ENCODE measurements at regions of chr3 and their contacts with region 1.

Region 1: DNA sequence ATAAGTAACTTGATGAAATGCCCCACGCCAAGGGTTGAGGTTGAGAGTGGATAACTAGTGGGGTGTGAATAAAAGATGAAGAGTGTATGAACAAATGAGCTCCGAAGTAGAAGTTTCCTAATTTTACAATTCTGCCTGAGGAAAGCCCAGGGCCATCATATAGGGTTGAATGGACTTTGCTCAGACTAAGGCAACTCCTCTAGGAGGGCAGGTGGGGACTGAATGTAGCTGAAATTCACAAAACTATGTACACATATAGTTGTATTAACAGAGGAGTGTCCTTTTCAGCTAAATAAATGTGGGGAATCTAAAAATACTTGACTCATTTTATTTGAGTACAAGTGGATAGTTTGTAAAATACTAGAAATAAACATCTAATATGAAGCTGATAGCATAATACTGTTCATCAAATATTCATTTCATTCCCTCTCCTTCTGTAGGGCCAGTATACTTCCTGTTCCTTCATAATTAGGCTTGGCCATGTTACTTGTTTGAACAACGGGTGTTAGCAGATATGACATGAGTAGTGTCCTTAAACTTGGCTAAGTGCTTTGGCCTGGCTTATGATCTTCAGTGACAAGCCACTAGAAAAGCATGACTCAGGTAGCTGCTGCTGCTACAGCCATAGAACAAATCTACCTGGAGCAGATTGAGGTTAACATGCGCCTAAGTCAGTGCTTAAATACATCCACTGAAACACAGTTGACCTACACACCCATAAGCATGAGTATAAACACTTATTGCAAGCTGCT is 26.5 kb downstream of the PLSCR1 start:
- DNase-seq: no peak
- H3K4me3 Mint-ChIP-seq: no peak overlapping the region
- H3K27ac Mint-ChIP-seq: peak overlapping the region; percentile 6
- H3K4me1 Mint-ChIP-seq: peaks cover 10% of the 10 kb centered on the region
- H3K27me3 Mint-ChIP-seq: no peaks in the 10 kb centered on the region

Region 2: DNA sequence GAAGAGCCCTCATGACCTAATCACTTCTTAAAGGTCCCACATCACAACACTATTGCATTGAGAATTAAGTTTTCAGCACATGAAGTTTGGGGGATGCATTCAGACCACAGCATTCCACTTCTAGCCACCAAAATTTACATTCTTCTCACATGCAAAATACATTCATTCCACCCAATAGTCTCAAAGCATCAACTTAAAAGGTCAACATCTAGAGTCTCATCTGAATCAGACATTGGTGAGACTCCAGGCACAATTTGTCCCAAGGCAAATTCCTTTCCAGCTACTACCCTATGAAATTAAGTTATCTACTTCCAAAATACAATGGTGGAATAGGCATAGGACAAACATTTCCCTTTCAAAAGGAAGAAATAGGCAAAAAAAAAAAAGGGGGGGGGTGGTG is 113.4 kb before region 1 on chr3:
- CTCF ChIA-PET with region 1: no interaction called
- POLR2A ChIA-PET with region 1: no interaction called
- DNase-seq: no peak
- H3K4me3 Mint-ChIP-seq: no peak overlapping the region
- H3K27ac Mint-ChIP-seq: no peak overlapping the region
- H3K4me1 Mint-ChIP-seq: no peaks in the 10 kb centered on the region
- H3K27me3 Mint-ChIP-seq: no peaks in the 10 kb centered on the region

Region 3: DNA sequence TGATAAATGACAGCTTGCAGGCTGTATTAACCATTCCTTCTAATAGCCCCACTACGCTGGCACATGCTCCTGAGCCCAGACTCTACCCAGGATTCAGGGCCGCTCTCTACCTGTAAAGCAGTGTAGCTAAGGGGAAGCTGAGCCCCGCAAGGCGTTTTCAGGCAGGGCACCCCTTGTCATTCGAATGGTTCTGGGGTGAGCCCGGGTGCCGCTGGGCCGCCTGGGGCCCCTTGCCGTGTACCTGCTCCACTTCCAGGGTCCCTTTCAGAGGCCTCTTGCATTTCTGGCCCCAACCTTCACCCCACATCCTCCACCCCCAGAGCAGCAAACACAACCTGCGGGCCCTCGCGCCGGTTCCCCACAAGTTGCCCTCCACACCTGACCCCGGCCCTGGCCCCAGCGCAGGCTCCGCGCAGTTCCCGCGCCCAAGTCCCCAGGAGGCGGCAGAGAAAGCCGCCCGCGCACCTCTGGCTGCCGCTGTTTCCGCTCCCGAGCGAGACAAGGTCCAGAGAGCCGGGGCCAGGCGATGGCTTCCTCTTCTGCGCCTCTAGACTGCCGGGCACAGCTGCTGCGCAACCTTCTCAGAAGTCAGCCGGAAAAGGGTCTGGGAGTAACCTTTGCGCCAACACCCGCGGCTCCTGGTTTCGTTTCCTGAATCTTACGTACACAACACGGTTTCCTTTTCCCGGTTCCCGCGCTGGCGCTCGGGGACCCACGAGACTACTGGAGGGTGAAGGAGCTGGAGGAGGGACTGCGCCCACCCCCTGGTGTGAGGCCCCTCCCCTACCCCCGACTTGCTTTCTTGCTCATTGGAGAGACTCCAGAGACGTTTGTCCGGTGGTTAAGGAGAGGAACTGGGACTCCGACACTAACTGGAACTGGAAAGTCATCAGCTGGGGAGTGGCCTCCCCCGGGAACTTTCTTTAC is 26.4 kb after region 1 on chr3 and contains the start of gene PLSCR1:
- CTCF ChIA-PET with region 1: interaction called, 5 read pairs
- POLR2A ChIA-PET with region 1: interaction called, 11 read pairs
- DNase-seq: peak; percentile 92
- H3K4me3 Mint-ChIP-seq: peak within 1 kb of the TSS; percentile 90
- H3K27ac Mint-ChIP-seq: peak within 1 kb of the TSS; percentile 94
- H3K4me1 Mint-ChIP-seq: peaks cover 74% of the 10 kb centered on the region
- H3K27me3 Mint-ChIP-seq: no peaks in the 10 kb centered on the region
- total RNA-seq, gene PLSCR1: 208 to 218 TPM

Measured in activated CD4-positive, alpha-beta memory T cell treated with anti-CD3 and anti-CD28 coated beads, Interleukin-2, amount 10 ng/mL, durations not matched to agents 7 days and 5 days (primary cell).